ENCODE measurements at regions of chrX and their contacts with region 1.

Region 1: GRCh38 chrX:119791438-119792231 is at the start of gene RPL39:
- DNase-seq: peak; percentile 51
- ATAC-seq: peak; percentile 90
- H3K4me3 ChIP-seq: peak within 1 kb of the TSS; percentile 76
- H3K27ac ChIP-seq: peak within 1 kb of the TSS; percentile 90
- H3K4me1 ChIP-seq: no peaks in the 10 kb centered on the region; the same call in 1 of the 2 replicates
- H3K27me3 ChIP-seq: no peaks in the 10 kb centered on the region
- CTCF ChIP-seq: no peak
- EP300 ChIP-seq: no peak
- POLR2A ChIP-seq: peak; percentile 96
- RAD21 ChIP-seq: no peak
- polyA plus RNA-seq, gene RPL39: 4,146 to 5,350 TPM

Region 2: GRCh38 chrX:118935352-118935751 is 856.3 kb before region 1 on chrX:
- CTCF ChIA-PET with region 1: no interaction called
- POLR2A ChIA-PET with region 1: no interaction called
- RAD21 ChIA-PET with region 1: no interaction called
- SMC1A ChIA-PET with region 1: no interaction called
- in situ Hi-C with region 1: no loop called
- intact Hi-C with region 1: no loop called
- DNase-seq: no peak
- ATAC-seq: no peak
- H3K4me3 ChIP-seq: no peak overlapping the region
- H3K27ac ChIP-seq: no peak overlapping the region
- H3K4me1 ChIP-seq: no peaks in the 10 kb centered on the region
- H3K27me3 ChIP-seq: no peaks in the 10 kb centered on the region
- CTCF ChIP-seq: no peak
- EP300 ChIP-seq: no peak
- POLR2A ChIP-seq: no peak
- RAD21 ChIP-seq: no peak

Region 3: GRCh38 chrX:119775517-119776238 is 16.0 kb before region 1 on chrX:
- CTCF ChIA-PET with region 1: interaction called, 13 read pairs
- POLR2A ChIA-PET with region 1: interaction called, 4 read pairs
- RAD21 ChIA-PET with region 1: interaction called, 7 read pairs
- SMC1A ChIA-PET with region 1: interaction called, 4 read pairs
- in situ Hi-C with region 1: no loop called
- intact Hi-C with region 1: no loop called
- DNase-seq: no peak
- ATAC-seq: peak; percentile 69
- H3K4me3 ChIP-seq: no peak overlapping the region
- H3K27ac ChIP-seq: peak overlapping the region; percentile 83
- H3K4me1 ChIP-seq: peaks cover 5% of the 10 kb centered on the region
- H3K27me3 ChIP-seq: no peaks in the 10 kb centered on the region
- CTCF ChIP-seq: no peak
- EP300 ChIP-seq: no peak
- POLR2A ChIP-seq: 0 out of 2 replicates have a peak, but pooled peaks have one; percentile 38
- RAD21 ChIP-seq: no peak

Region 4: DNA sequence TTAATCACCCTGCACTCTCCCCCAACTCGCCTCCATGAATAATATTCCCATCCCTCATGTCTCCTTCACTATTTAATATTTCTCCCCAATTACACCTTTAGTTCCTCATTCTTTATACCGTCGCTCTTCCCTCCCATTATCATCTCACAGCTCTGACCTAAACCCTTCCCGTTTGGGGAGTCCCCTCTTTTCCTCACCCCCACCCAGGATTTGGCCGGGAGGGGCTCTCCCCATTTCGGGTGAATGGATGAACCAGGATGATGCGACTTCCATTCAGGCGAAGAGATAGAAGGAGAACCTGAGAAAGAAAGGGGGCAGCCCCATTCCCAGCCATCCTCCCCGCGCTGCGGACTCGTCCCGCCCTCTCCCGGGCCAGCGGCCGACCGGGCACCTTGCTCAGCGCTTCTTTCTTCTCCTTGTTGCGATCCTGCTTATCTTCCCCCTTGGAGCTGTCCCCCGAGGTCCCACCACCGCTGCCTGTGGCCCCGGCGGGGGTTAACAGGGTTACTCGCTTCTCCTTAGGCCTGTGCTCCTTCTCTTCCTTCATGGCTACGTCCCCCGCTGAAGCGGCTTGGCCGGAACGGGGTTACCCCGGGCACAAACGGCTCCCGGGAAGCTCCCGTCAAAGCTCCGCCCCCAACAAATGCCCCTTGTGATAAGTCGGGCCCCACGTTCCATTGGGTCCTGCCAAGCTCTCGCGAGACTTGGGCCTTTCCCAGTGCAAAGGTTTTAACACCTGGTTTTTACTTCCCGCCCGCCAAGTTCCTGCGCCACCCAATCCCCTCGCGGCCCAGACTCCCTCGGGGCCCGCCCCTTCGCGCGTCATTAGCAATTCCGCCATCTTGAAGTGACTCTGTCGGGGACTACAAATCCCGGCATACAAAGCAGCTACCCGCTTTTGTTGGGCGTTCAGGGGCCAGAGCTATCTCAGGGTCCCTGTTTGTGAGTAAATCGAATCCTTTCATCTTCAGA is 61.0 kb after region 1 on chrX and contains the start of gene UPF3B:
- CTCF ChIA-PET with region 1: interaction called, 7 read pairs
- POLR2A ChIA-PET with region 1: interaction called, 24 read pairs
- RAD21 ChIA-PET with region 1: interaction called, 20 read pairs
- SMC1A ChIA-PET with region 1: interaction called, 10 read pairs
- in situ Hi-C with region 1: no loop called
- intact Hi-C with region 1: loop called (anchors 2 kb)
- DNase-seq: peak; percentile 84
- ATAC-seq: peak; percentile 96
- H3K4me3 ChIP-seq: peak within 1 kb of the TSS; percentile 70
- H3K27ac ChIP-seq: peak within 1 kb of the TSS; percentile 81
- H3K4me1 ChIP-seq: no peaks in the 10 kb centered on the region
- H3K27me3 ChIP-seq: no peaks in the 10 kb centered on the region
- CTCF ChIP-seq: no peak
- EP300 ChIP-seq: no peak
- POLR2A ChIP-seq: peak; percentile 78
- RAD21 ChIP-seq: no peak
- polyA plus RNA-seq, gene UPF3B: 24.6 to 27.0 TPM

Region 5: GRCh38 chrX:119880552-119881437 is 89.2 kb after region 1 on chrX:
- CTCF ChIA-PET with region 1: interaction called, 5 read pairs
- POLR2A ChIA-PET with region 1: no interaction called
- RAD21 ChIA-PET with region 1: interaction called, 4 read pairs
- SMC1A ChIA-PET with region 1: interaction called, 4 read pairs
- in situ Hi-C with region 1: no loop called
- intact Hi-C with region 1: loop called (anchors 2 kb)
- DNase-seq: peak; percentile 35
- ATAC-seq: peak; percentile 98
- H3K4me3 ChIP-seq: no peak overlapping the region
- H3K27ac ChIP-seq: no peak overlapping the region
- H3K4me1 ChIP-seq: peaks cover 10% of the 10 kb centered on the region
- H3K27me3 ChIP-seq: no peaks in the 10 kb centered on the region
- CTCF ChIP-seq: peak; percentile 76 to 82 (median 77)
- EP300 ChIP-seq: no peak
- POLR2A ChIP-seq: no peak
- RAD21 ChIP-seq: peak; percentile 76